B cell (primary cell): ENCODE measurements at regions of chr17 and their contacts with region 1.

Region 1: GRCh38 chr17:78412403-78412802 is 34.0 kb downstream of the PGS1 start:
- DNase-seq: no peak
- ATAC-seq: no peak
- H3K4me3 ChIP-seq: no peak overlapping the region
- H3K4me3 Mint-ChIP-seq: no peak overlapping the region
- H3K27ac ChIP-seq: no peak overlapping the region
- H3K27ac Mint-ChIP-seq: peak overlapping the region; percentile 20
- H3K4me1 ChIP-seq: peaks cover 0 to 6% of the 10 kb centered on the region in 2 donors
- H3K4me1 Mint-ChIP-seq: peaks cover 24% of the 10 kb centered on the region
- H3K27me3 ChIP-seq: no peaks in the 10 kb centered on the region
- H3K27me3 Mint-ChIP-seq: no peaks in the 10 kb centered on the region
- CTCF ChIP-seq: no peak

Region 2: DNA sequence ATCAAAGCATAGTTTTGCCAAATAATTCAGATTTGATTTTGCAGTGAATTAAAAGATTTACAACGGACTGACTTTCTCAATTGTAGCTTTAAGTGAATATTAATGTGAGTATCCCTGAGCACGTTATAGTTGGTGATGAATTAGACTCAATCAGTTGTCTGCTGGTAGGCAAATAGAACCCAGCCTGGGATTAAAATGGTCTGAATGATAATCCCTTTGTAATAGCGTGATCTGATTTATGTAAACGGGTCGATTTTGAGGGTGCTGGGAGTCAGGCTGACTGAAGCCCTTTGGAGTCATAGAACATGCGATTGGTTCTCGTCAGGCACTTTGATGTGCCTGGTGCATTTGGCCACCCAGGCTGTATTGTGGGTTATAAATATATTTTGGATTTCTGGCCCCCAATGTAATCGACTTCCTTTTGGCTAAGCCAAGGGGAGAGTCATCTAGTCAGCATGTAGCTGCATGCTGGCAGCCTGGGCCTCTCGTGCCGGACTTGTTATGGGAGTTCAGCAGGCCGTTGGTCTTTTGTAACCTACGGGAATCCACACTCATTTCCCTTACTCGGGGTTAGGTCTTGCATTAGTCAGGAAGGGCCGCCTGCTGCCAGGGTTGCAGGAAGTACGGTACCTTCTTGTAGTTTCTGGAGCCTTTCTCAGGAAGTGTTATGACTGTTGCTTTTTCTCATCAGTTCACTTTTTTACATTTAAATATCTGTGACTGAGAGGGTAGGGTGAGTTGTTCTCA is 28.5 kb before region 1 on chr17:
- CTCF ChIA-PET with region 1: no interaction called
- POLR2A ChIA-PET with region 1: no interaction called
- intact Hi-C with region 1: loop called (anchors 5 kb)
- DNase-seq: peak; percentile 41
- ATAC-seq: no peak
- H3K4me3 ChIP-seq: peak overlapping the region in 1 of 5 experiments; percentile 22
- H3K4me3 Mint-ChIP-seq: peak overlapping the region; percentile 62
- H3K27ac ChIP-seq: peak overlapping the region; percentile 28 to 78
- H3K27ac Mint-ChIP-seq: peak overlapping the region; percentile 71
- H3K4me1 ChIP-seq: peaks cover 66 to 80% of the 10 kb centered on the region in 2 donors
- H3K4me1 Mint-ChIP-seq: peaks cover 79% of the 10 kb centered on the region
- H3K27me3 ChIP-seq: no peaks in the 10 kb centered on the region
- H3K27me3 Mint-ChIP-seq: no peaks in the 10 kb centered on the region
- CTCF ChIP-seq: no peak